ENCODE measurements at regions of chr19 and their contacts with region 1.

Region 1: DNA sequence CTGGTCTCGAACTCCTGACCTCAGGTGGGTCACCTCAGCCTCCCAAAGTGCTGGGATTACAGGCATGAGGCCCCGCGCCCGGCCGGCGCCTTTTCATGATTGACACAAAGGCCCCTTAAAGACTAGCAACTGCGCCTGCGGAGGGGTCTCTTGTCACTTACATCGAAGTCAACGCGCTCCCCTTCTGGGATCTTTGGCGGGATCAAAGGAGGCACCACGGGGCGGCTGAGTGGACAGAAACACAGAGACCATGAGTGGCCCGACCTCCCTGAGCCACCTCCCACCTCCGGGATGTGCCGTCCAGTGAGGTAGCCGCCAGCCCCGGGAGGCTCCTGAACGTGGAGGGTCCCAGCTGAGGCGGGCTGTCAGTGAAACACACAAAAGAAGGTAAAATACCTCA is 7.3 kb downstream of the TNNT1 start:
- DNase-seq: no peak
- ATAC-seq: no peak
- H3K4me3 ChIP-seq: no peak overlapping the region
- H3K4me3 Mint-ChIP-seq: no peak overlapping the region
- H3K27ac ChIP-seq: no peak overlapping the region
- H3K27ac Mint-ChIP-seq: no peak overlapping the region
- H3K4me1 ChIP-seq: peaks cover 6% of the 10 kb centered on the region
- H3K4me1 Mint-ChIP-seq: peaks cover 3% of the 10 kb centered on the region
- H3K27me3 ChIP-seq: peaks cover 22 to 58% of the 10 kb centered on the region in 2 experiments
- H3K27me3 Mint-ChIP-seq: peaks cover 47% of the 10 kb centered on the region
- CTCF ChIP-seq: no peak

Region 2: DNA sequence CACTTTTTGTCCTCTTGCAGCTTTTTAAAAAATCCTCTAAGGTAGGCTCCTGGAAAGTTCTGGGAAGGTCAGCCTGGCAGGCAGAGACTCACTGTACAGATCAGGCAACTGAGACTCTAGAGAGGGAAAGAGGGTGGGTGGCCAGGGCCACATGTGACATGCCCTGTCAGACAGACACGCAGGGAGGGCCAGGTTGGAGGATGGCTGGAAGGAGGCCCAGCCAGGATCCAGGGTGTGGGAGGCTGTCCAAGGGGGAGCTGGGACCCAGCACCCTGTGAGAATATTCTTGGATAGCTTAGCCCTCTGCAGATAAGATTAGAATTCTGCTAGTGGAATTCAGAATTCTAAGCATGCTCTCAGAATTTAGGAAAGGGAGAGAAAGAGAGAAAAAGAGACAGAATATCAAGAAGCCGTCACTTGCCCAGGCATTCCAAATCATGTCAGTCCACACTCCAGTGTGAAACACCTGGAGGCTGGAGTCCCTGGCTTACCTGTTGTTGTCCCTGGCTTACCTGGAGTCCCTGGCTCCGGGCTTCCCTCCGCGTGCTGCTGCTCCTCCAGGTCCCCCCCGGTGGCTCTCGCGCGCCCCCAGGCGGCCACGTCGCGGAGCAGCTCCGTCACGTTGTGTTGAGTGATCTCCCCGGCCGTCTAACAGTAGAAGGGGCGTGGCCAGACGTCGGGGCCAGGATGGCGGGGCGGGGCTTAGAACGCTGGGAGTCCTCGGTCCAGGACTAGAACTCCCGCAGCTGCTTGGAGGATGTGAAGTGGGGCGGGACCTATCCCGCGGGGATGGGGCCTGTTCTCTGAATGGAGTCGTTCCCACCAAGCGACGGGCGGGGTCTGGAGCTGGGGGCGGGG is 18.7 kb after region 1 on chr19:
- CTCF ChIA-PET with region 1: interaction called, 19 read pairs
- POLR2A ChIA-PET with region 1: no interaction called
- intact Hi-C with region 1: loop called in 1 of 2 experiments (anchors 1 kb)
- DNase-seq: peak; percentile 69 to 91 (median 83)
- ATAC-seq: peak; percentile 96
- H3K4me3 ChIP-seq: no peak overlapping the region
- H3K4me3 Mint-ChIP-seq: no peak overlapping the region
- H3K27ac ChIP-seq: no peak overlapping the region
- H3K27ac Mint-ChIP-seq: no peak overlapping the region
- H3K4me1 ChIP-seq: peaks cover 14% of the 10 kb centered on the region
- H3K4me1 Mint-ChIP-seq: peaks cover 9% of the 10 kb centered on the region
- H3K27me3 ChIP-seq: peaks cover 15 to 29% of the 10 kb centered on the region in 2 experiments
- H3K27me3 Mint-ChIP-seq: peaks cover 58% of the 10 kb centered on the region
- CTCF ChIP-seq: peak; percentile 96

Region 3: DNA sequence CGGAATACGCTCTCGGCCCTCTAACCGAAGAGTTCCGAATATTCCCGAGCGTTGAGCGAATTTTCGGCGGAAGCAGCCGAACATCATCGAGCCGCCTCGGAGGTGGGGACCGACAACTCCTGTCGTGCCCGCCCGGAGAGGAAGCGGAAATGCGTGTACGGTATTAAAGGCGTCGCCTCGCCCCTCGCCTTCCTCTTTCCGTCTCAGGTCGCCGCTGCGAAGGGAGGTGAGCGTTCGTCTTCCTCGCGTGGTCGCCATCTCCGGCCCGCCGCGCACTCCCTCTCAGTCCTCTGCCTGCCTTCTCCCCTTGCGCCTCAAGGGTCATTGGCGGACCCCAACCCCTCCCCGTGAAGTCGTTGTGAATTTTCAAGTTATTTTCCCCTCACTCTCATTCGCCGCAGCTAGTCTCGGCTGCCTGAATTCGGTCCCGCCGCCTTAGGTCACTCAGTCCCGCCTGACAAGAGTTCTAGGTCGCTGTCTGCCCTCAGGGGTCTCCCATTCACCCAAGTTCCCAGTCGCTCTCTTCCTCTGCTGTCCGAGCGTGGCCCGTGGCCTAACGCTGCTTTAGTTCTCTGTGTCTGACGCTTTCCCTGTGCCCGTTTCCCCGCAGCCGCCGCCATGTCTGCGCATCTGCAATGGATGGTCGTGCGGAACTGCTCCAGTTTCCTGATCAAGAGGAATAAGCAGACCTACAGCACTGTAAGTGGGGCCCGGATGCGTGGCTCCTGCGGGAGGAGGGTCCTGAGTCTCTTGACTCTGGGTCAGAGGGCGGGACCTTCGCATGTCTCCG is 244.2 kb after region 1 on chr19 and contains the start of gene RPL28:
- CTCF ChIA-PET with region 1: interaction called, 14 read pairs
- POLR2A ChIA-PET with region 1: interaction called, 3 read pairs
- intact Hi-C with region 1: no loop called
- DNase-seq: peak; percentile 97 to 99 (median 99)
- ATAC-seq: peak; percentile 80
- H3K4me3 ChIP-seq: peak within 1 kb of the TSS; percentile 75 to 94
- H3K4me3 Mint-ChIP-seq: peak within 1 kb of the TSS; percentile 100
- H3K27ac ChIP-seq: peak within 1 kb of the TSS; percentile 95 to 97
- H3K27ac Mint-ChIP-seq: peak within 1 kb of the TSS; percentile 100
- H3K4me1 ChIP-seq: peaks cover 59% of the 10 kb centered on the region
- H3K4me1 Mint-ChIP-seq: peaks cover 75% of the 10 kb centered on the region
- H3K27me3 ChIP-seq: no peaks in the 10 kb centered on the region
- H3K27me3 Mint-ChIP-seq: no peaks in the 10 kb centered on the region
- CTCF ChIP-seq: no peak
- total RNA-seq, gene RPL28: 4,227 to 4,270 TPM

Region 4: DNA sequence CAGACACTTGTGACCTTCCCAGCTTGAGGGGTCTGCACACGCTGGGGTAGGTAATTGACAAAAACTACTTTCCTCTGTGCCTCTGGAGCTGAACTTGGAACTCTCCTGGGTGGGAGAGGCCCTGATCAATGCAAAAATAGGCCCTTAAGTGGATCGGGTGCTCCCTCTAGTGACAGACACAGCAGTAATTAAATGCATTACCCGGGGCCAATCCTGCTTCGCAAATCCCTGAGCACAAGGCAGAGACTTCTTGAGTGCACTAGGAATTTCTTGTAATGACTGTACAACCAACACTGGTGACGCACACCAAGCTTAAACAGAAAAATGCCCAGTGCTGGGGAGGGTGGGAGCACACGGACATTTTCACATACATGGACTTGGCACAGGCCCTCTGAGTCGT is 276.5 kb after region 1 on chr19:
- CTCF ChIA-PET with region 1: interaction called, 45 read pairs
- POLR2A ChIA-PET with region 1: no interaction called
- intact Hi-C with region 1: loop called in 1 of 2 experiments (anchors 1 kb)
- DNase-seq: peak in 8 of 9 experiments; percentile 25 to 78 (median 54)
- ATAC-seq: peak; percentile 54
- H3K4me3 ChIP-seq: no peak overlapping the region
- H3K4me3 Mint-ChIP-seq: no peak overlapping the region
- H3K27ac ChIP-seq: no peak overlapping the region
- H3K27ac Mint-ChIP-seq: no peak overlapping the region
- H3K4me1 ChIP-seq: peaks cover 18% of the 10 kb centered on the region
- H3K4me1 Mint-ChIP-seq: peaks cover 23% of the 10 kb centered on the region
- H3K27me3 ChIP-seq: no peaks in the 10 kb centered on the region
- H3K27me3 Mint-ChIP-seq: no peaks in the 10 kb centered on the region
- CTCF ChIP-seq: peak; percentile 68

Region 5: DNA sequence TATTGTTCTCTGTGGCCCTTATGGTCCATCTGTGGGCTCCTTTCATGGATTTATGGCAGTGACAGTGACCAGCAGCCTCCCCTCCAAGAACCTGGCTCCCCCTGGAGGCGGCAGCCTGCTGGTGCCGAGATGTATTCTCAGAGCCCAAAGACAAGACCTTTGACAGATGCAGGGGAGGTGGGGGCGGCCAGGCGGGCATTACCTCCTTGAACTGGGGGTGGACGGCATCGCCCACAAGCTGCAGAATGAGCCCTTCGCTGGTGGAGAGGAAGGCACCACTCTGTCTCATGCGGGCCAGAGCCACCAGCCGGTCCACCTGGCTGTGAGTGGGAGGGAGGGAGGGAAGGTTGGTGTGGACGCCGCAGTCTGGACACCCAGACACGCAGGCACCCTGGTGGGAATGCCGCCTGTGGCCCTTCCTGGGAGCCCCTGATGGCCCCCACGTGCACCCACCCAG is 313.1 kb after region 1 on chr19:
- CTCF ChIA-PET with region 1: interaction called, 5 read pairs
- POLR2A ChIA-PET with region 1: interaction called, 4 read pairs
- intact Hi-C with region 1: loop called in 1 of 2 experiments (anchors 1 kb)
- DNase-seq: peak in 6 of 9 experiments; percentile 46 to 65 (median 56)
- ATAC-seq: peak; percentile 39
- H3K4me3 ChIP-seq: no peak overlapping the region
- H3K4me3 Mint-ChIP-seq: no peak overlapping the region
- H3K27ac ChIP-seq: no peak overlapping the region
- H3K27ac Mint-ChIP-seq: no peak overlapping the region
- H3K4me1 ChIP-seq: peaks cover 13% of the 10 kb centered on the region
- H3K4me1 Mint-ChIP-seq: peaks cover 20% of the 10 kb centered on the region
- H3K27me3 ChIP-seq: peaks cover 10 to 18% of the 10 kb centered on the region in 2 experiments
- H3K27me3 Mint-ChIP-seq: peaks cover 24% of the 10 kb centered on the region
- CTCF ChIP-seq: peak; percentile 55

Region 6: GRCh38 chr19:55494172-55494761 is 352.6 kb after region 1 on chr19:
- CTCF ChIA-PET with region 1: interaction called, 10 read pairs
- POLR2A ChIA-PET with region 1: no interaction called
- intact Hi-C with region 1: no loop called
- DNase-seq: no peak
- ATAC-seq: peak; percentile 42
- H3K4me3 ChIP-seq: no peak overlapping the region
- H3K4me3 Mint-ChIP-seq: peak overlapping the region; percentile 55
- H3K27ac ChIP-seq: no peak overlapping the region
- H3K27ac Mint-ChIP-seq: peak overlapping the region; percentile 37
- H3K4me1 ChIP-seq: no peaks in the 10 kb centered on the region
- H3K4me1 Mint-ChIP-seq: peaks cover 2% of the 10 kb centered on the region
- H3K27me3 ChIP-seq: no peaks in the 10 kb centered on the region
- H3K27me3 Mint-ChIP-seq: peaks cover 7% of the 10 kb centered on the region
- CTCF ChIP-seq: no peak